Activated CD8-positive, alpha-beta memory T cell treated with anti-CD3 and anti-CD28 coated beads, Interleukin-2, amount 10 ng/mL, durations not matched to agents 7 days and 5 days (primary cell): ENCODE measurements at regions of chr14 and their contacts with region 1.

Region 1: GRCh38 chr14:106459971-106460730 is 933.8 kb downstream of the TMEM121 start:
- DNase-seq: peak; percentile 55
- ATAC-seq: peak; percentile 42
- H3K4me3 Mint-ChIP-seq: no peak overlapping the region
- H3K27ac Mint-ChIP-seq: no peak overlapping the region
- H3K4me1 Mint-ChIP-seq: no peaks in the 10 kb centered on the region
- H3K27me3 Mint-ChIP-seq: peaks cover 5% of the 10 kb centered on the region

Region 2: GRCh38 chr14:106436310-106436905 is 23.7 kb before region 1 on chr14:
- CTCF ChIA-PET with region 1: interaction called, 10 read pairs
- DNase-seq: peak; percentile 65
- ATAC-seq: no peak
- H3K4me3 Mint-ChIP-seq: no peak overlapping the region
- H3K27ac Mint-ChIP-seq: no peak overlapping the region
- H3K4me1 Mint-ChIP-seq: no peaks in the 10 kb centered on the region
- H3K27me3 Mint-ChIP-seq: peaks cover 15% of the 10 kb centered on the region

Region 3: DNA sequence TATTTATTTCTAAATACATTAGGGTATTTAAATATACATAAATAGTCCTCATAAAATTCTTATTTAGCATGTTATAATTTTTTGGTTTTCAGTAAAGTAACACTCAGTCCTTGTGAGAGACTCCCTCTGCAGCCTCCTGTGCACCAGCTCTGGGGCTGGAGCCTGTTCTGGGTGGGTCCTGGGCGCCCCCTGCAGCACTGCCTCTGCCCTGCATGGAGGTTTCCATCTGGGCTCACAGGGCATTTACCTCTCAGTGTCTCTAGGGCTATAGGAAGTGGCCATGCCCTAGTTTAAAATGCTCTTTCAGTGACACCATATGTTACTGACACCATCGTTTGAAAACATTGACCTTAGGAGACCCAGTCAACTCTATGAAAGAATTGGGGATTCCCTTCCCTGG is 221.4 kb after region 1 on chr14:
- CTCF ChIA-PET with region 1: no interaction called
- DNase-seq: no peak
- ATAC-seq: peak; percentile 78
- H3K4me3 Mint-ChIP-seq: no peak overlapping the region
- H3K27ac Mint-ChIP-seq: no peak overlapping the region
- H3K4me1 Mint-ChIP-seq: no peaks in the 10 kb centered on the region
- H3K27me3 Mint-ChIP-seq: peaks cover 69% of the 10 kb centered on the region